ENCODE measurements at regions of chr21 and their contacts with region 1.

Region 1: DNA sequence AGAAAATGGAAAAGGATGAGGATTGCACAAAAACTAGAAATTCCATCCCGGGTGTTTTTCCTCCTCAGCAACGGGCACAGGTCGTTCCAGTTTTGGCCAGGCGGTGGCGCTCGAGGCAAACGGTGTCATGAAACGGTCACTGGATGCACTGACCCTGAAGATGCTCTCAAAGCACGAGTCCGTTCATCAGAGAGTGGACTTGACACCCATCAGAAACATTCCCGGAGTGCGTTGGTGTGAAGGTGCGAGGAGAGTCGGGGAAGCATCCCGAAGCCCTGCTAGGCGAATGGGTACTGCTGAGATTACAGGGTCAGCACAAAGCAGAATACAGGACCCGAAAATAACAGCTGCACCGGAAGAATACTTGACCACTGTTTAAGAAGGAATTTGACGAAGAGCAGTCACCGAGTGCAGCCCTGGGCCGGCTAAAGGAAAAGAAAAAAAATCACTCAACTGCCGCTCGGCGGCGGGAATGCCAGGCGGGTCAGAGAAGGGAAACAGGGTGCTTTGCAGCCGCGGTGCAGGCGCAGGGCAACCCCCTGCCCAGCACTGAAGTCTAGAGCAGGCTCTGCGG is 71.7 kb upstream of the ETS2 start:
- DNase-seq: peak; percentile 70
- H3K4me3 ChIP-seq: no peak overlapping the region
- H3K27ac ChIP-seq: no peak overlapping the region
- H3K4me1 ChIP-seq: peaks cover 14% of the 10 kb centered on the region
- H3K27me3 ChIP-seq: no peaks in the 10 kb centered on the region

Region 2: DNA sequence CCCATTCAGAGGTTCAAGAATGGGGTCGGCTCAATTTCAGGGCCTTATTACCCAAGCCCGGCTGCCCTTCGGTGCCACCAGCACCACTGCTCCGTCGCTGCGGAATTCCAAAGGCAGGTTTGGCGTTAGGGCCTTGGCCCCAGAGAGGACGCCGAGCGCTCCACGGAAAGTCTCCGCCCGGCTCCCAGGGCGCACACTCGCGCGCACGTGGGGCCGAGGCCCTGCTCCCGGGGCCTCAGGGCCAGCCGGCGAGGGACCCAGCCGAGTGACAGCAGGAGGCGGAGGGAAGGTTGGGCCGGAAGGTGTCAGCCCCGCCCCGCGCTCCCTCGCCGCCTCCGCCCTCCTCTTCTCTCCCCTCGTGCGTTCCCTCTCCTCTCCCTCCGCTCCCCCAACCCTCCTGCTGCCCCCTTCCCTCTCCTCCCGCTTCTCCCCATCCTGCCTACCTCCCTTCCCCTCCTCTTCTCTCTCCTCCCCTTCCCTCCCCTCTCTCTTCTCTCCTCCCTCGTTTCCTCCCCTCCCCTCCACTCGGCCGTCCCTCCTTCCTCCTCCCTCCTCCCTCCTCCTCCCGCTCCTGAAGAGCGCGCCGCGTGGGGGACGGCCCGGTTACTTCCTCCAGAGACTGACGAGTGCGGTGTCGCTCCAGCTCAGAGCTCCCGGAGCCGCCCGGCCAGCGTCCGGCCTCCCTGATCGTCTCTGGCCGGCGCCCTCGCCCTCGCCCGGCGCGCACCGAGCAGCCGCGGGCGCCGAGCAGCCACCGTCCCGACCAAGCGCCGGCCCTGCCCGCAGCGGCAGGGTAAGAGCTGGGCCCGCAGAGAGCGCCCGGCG is 71.5 kb after region 1 on chr21 and contains the start of gene ETS2:
- in situ Hi-C with region 1: loop called (anchors 10 kb)
- DNase-seq: peak; percentile 89
- H3K4me3 ChIP-seq: peak within 1 kb of the TSS; percentile 82
- H3K27ac ChIP-seq: no peak within 1 kb of the TSS
- H3K4me1 ChIP-seq: peaks cover 14% of the 10 kb centered on the region
- H3K27me3 ChIP-seq: no peaks in the 10 kb centered on the region
- total RNA-seq, gene ETS2: 4.4 and 7.0 TPM in 2 replicates

Region 3: DNA sequence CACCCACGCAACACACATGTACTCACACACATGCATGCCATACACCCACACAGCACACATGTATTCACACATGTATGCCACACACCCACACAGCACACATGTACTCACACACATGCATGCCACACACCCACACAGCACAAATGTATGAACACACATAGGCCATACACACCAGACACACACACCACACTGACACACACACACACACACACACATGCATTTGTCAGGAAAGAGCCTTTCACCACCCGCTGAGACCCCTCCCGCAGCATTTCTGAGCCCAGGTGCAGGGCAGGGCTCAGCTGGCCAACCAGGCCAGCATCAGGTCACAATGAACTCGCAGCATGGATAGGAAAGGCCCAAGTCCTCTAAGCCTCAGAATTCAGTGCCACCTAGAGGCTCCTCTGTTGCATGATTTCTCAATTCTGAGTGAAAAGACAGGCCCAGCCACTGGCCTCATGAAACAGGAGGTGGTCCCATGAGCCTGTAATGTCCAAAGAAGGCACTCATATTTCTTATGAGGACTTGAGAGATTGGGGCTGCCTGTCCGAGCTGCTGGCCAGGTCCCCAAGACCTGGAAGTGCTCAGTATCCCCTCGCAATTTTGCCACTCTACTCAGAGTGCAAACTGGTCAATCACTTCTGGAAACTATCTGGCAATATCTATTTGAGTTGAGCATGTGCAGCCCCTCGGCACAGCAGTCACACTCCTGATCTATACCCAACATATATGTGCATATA is 391.9 kb after region 1 on chr21:
- in situ Hi-C with region 1: loop called (anchors 5 kb)
- DNase-seq: peak; percentile 84
- H3K4me3 ChIP-seq: no peak overlapping the region
- H3K27ac ChIP-seq: no peak overlapping the region
- H3K4me1 ChIP-seq: no peaks in the 10 kb centered on the region
- H3K27me3 ChIP-seq: no peaks in the 10 kb centered on the region

Measured in GM23248 (cell line).